ENCODE measurements at regions of chr5 and their contacts with region 1.

Region 1: GRCh38 chr5:173204185-173204979 is 30.6 kb downstream of the NKX2-5 start:
- DNase-seq: peak; percentile 33
- H3K4me3 Mint-ChIP-seq: no peak overlapping the region
- H3K27ac Mint-ChIP-seq: no peak overlapping the region
- H3K4me1 Mint-ChIP-seq: peaks cover 9% of the 10 kb centered on the region
- H3K27me3 Mint-ChIP-seq: peaks cover 91% of the 10 kb centered on the region
- CTCF ChIP-seq: peak; percentile 62

Region 2: DNA sequence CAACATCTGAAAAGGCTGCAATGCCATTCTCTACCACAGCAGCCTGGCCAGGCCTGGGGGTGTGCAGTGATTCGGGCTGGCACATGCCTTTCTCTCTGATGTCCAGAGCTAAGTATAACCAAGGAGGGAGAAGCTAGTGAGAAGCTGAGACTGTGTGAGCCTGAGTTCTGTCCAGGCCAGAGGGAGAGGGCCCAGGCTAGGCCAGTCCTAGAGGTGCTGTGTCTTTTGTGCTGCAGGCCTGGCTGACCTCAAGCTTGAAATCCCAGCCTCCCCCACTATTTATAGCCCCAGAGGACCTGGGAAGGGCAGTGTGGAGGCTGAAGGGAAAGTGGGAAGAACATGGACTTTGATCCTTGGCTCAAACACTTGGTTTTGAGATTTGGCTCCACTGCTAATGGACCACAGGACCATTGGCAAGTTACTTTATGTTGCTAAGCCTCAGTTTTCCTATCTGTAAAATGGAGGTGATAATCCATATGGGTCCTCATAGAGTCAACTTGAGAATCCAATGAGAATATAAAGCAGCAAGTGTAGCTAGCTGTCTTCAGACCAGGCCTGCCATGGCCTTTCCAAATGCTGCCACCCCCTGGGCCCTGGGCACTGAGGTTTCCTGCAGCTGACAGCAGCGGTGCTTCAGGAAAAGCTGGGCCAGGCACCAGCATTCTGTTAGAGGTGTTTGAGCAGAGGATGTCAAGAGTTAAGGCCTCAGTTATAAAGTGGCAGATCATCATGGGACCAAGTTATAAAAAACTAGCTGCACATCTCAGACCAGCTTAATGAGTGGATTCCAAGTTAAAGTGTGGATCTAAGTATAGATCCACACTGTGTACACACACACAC is 39.0 kb before region 1 on chr5:
- CTCF ChIA-PET with region 1: no interaction called
- intact Hi-C with region 1: loop called (anchors 1 kb)
- DNase-seq: no peak
- H3K4me3 Mint-ChIP-seq: no peak overlapping the region
- H3K27ac Mint-ChIP-seq: no peak overlapping the region
- H3K4me1 Mint-ChIP-seq: no peaks in the 10 kb centered on the region
- H3K27me3 Mint-ChIP-seq: peaks cover 32% of the 10 kb centered on the region
- CTCF ChIP-seq: no peak

Region 3: GRCh38 chr5:173604141-173604540 is 399.8 kb after region 1 on chr5:
- CTCF ChIA-PET with region 1: interaction called, 14 read pairs
- intact Hi-C with region 1: no loop called
- DNase-seq: no peak
- H3K4me3 Mint-ChIP-seq: no peak overlapping the region
- H3K27ac Mint-ChIP-seq: no peak overlapping the region
- H3K4me1 Mint-ChIP-seq: no peaks in the 10 kb centered on the region
- H3K27me3 Mint-ChIP-seq: no peaks in the 10 kb centered on the region
- CTCF ChIP-seq: no peak